ENCODE measurements at regions of chr10 and their contacts with region 1.

Region 1: GRCh38 chr10:35635576-35635975 is 6.5 kb downstream of the FZD8 start:
- DNase-seq: no peak
- ATAC-seq: peak; percentile 82 to 86 (median 84)
- H3K4me3 ChIP-seq: peak overlapping the region in 1 of 3 donors; percentile 6
- H3K27ac ChIP-seq: no peak overlapping the region
- H3K4me1 ChIP-seq: peaks cover 0 to 5% (median 0%) of the 10 kb centered on the region in 4 donors
- H3K27me3 ChIP-seq: no peaks in the 10 kb centered on the region
- CTCF ChIP-seq: peak; percentile 91 to 94 (median 92)
- POLR2A ChIP-seq: no peak

Region 2: DNA sequence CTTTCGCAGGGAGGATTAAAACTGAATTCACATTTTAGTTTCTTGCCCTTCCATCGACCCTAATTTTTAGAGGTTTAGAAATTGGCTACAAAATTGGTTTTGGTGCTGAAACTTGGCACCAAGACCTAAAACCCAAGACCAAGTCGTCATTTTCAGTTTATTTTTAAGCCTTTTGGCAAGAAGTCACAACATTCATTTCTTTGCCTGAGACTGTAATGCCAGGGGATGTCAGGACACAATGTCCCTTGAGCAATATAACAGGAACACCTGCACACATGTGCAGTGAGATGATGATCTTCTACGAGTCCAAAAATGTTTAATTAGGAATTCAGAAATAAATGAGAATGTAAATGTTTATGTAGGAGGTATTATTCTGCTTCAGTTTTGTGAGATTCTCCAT is 1154.4 kb after region 1 on chr10:
- intact Hi-C with region 1: loop called in 1 of 2 experiments (anchors 10 kb)
- DNase-seq: no peak
- ATAC-seq: no peak
- H3K4me3 ChIP-seq: no peak overlapping the region
- H3K27ac ChIP-seq: no peak overlapping the region
- H3K4me1 ChIP-seq: no peaks in the 10 kb centered on the region
- H3K27me3 ChIP-seq: no peaks in the 10 kb centered on the region
- CTCF ChIP-seq: no peak
- POLR2A ChIP-seq: no peak

Region 3: GRCh38 chr10:36888929-36889573 is 1253.5 kb after region 1 on chr10:
- intact Hi-C with region 1: loop called in 1 of 2 experiments (anchors 10 kb)
- DNase-seq: peak in 2 of 3 donors; percentile 24 to 45
- ATAC-seq: peak; percentile 36 to 67 (median 48)
- H3K4me3 ChIP-seq: no peak overlapping the region
- H3K27ac ChIP-seq: no peak overlapping the region
- H3K4me1 ChIP-seq: no peaks in the 10 kb centered on the region
- H3K27me3 ChIP-seq: no peaks in the 10 kb centered on the region
- CTCF ChIP-seq: no peak
- POLR2A ChIP-seq: no peak